Heart left ventricle (tissue), 16 donors: ENCODE measurements at regions of chr18 and their contacts with region 1.

Region 1: DNA sequence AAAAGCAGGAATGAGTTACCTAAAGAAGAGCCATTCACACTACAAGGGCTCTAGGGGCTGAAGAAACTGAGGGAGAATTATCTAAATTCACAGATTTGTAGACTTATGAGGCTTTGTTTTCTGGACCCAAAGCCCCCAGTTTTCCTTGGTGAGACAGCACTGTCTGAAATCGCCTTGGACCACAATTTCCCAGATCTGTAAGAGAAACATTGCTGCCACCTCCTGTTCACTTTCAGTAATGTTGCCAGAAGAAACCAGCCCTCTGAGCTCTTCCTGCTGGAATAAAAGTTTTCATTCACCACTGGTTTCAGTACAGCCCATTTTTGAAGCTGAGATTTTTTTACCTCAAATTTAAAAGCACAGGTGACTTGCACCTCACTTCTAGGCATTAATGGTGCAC is 169.2 kb downstream of the CDH20 start:
- DNase-seq: peak in 2 of 5 donors; percentile 15 to 27
- ATAC-seq: peak in 3 of 4 donors; percentile 26 to 68 (median 54)
- H3K4me3 ChIP-seq: no peak overlapping the region
- H3K27ac ChIP-seq: no peak overlapping the region
- H3K4me1 ChIP-seq: peaks cover 0 to 7% (median 0%) of the 10 kb centered on the region in 12 donors
- H3K27me3 ChIP-seq: peaks cover 0 to 4% (median 0%) of the 10 kb centered on the region in 9 donors
- CTCF ChIP-seq: peak; percentile 50 to 78 (median 66)
- POLR2A ChIP-seq: no peak

Region 2: GRCh38 chr18:59988098-59988706 is 1514.3 kb before region 1 on chr18:
- intact Hi-C with region 1: loop called in 6 of 10 experiments (anchors 5 to 10 kb)
- DNase-seq: peak in 3 of 5 donors; percentile 19 to 28 (median 27)
- ATAC-seq: no peak
- H3K4me3 ChIP-seq: no peak overlapping the region
- H3K27ac ChIP-seq: no peak overlapping the region
- H3K4me1 ChIP-seq: no peaks in the 10 kb centered on the region
- H3K27me3 ChIP-seq: peaks cover 0 to 25% (median 4%) of the 10 kb centered on the region in 9 donors
- CTCF ChIP-seq: peak; percentile 74 to 98 (median 86)
- POLR2A ChIP-seq: no peak

Region 3: GRCh38 chr18:60809937-60810336 is 692.5 kb before region 1 on chr18:
- intact Hi-C with region 1: loop called in 6 of 10 experiments (anchors 2 to 10 kb)
- DNase-seq: no peak
- ATAC-seq: no peak
- H3K4me3 ChIP-seq: no peak overlapping the region
- H3K27ac ChIP-seq: no peak overlapping the region
- H3K4me1 ChIP-seq: no peaks in the 10 kb centered on the region
- H3K27me3 ChIP-seq: no peaks in the 10 kb centered on the region
- CTCF ChIP-seq: no peak
- POLR2A ChIP-seq: no peak

Region 4: GRCh38 chr18:61093965-61094364 is 408.5 kb before region 1 on chr18:
- intact Hi-C with region 1: loop called in 7 of 10 experiments (anchors 5 to 10 kb)
- DNase-seq: no peak
- ATAC-seq: no peak
- H3K4me3 ChIP-seq: no peak overlapping the region
- H3K27ac ChIP-seq: no peak overlapping the region
- H3K4me1 ChIP-seq: no peaks in the 10 kb centered on the region
- H3K27me3 ChIP-seq: peaks cover 0 to 4% (median 0%) of the 10 kb centered on the region in 9 donors
- CTCF ChIP-seq: no peak
- POLR2A ChIP-seq: no peak

Region 5: GRCh38 chr18:61426492-61427053 is 75.9 kb before region 1 on chr18:
- intact Hi-C with region 1: loop called in 1 of 10 experiments (anchors 10 kb)
- DNase-seq: no peak
- ATAC-seq: no peak
- H3K4me3 ChIP-seq: no peak overlapping the region
- H3K27ac ChIP-seq: no peak overlapping the region
- H3K4me1 ChIP-seq: no peaks in the 10 kb centered on the region
- H3K27me3 ChIP-seq: no peaks in the 10 kb centered on the region
- CTCF ChIP-seq: no peak
- POLR2A ChIP-seq: no peak